ENCODE measurements at regions of chr1 and their contacts with region 1.

Region 1: GRCh38 chr1:150561974-150562445 is 12.8 kb downstream of the ADAMTSL4 start:
- DNase-seq: peak; percentile 92
- H3K4me3 ChIP-seq: peak overlapping the region; percentile 3 to 49 (median 41)
- H3K27ac ChIP-seq: peak overlapping the region; percentile 99
- H3K4me1 ChIP-seq: peaks cover 57% of the 10 kb centered on the region
- H3K27me3 ChIP-seq: no peaks in the 10 kb centered on the region
- CTCF ChIP-seq: no peak
- POLR2A ChIP-seq: peak; percentile 15

Region 2: GRCh38 chr1:150235852-150236613 is 326.0 kb before region 1 on chr1 and contains the start of gene ANP32E:
- CTCF ChIA-PET with region 1: no interaction called
- POLR2A ChIA-PET with region 1: no interaction called
- dilution Hi-C with region 1: no loop called
- intact Hi-C with region 1: no loop called
- DNase-seq: peak; percentile 99
- H3K4me3 ChIP-seq: peak within 1 kb of the TSS; percentile 72 to 95 (median 86)
- H3K27ac ChIP-seq: peak within 1 kb of the TSS; percentile 61
- H3K4me1 ChIP-seq: peaks cover 11% of the 10 kb centered on the region
- H3K27me3 ChIP-seq: no peaks in the 10 kb centered on the region
- CTCF ChIP-seq: no peak
- POLR2A ChIP-seq: peak; percentile 98
- total RNA-seq, gene ANP32E: 53.4 and 57.9 TPM in 2 replicates

Region 3: DNA sequence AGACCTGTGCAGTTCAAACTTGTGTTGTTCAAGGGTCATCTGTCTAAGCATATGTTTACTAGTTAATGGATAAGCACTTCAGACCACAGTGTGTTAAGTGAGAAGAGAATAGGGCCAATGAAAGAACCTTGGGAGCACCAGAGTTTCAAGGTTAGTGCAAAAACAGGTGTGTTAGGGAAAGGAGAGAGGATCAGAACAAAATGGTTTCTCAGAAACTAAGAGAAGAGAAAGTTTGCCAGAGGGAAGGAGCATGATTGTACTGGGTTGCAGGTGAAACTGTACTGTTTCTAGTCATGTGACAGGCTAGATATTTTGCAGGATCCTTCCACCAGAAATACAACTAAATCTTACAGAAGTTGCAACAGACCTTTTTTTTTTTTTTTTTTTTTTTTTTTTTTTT is 174.8 kb before region 1 on chr1:
- CTCF ChIA-PET with region 1: no interaction called
- POLR2A ChIA-PET with region 1: no interaction called
- dilution Hi-C with region 1: no loop called
- intact Hi-C with region 1: no loop called
- DNase-seq: no peak
- H3K4me3 ChIP-seq: no peak overlapping the region
- H3K27ac ChIP-seq: no peak overlapping the region
- H3K4me1 ChIP-seq: no peaks in the 10 kb centered on the region
- H3K27me3 ChIP-seq: no peaks in the 10 kb centered on the region
- CTCF ChIP-seq: no peak
- POLR2A ChIP-seq: no peak

Region 4: GRCh38 chr1:150486964-150487762 is 74.8 kb before region 1 on chr1 and contains the start of gene TARS2:
- CTCF ChIA-PET with region 1: no interaction called
- POLR2A ChIA-PET with region 1: no interaction called
- dilution Hi-C with region 1: no loop called
- intact Hi-C with region 1: loop called (anchors 2 kb)
- DNase-seq: peak; percentile 99
- H3K4me3 ChIP-seq: peak within 1 kb of the TSS; percentile 53 to 81 (median 65)
- H3K27ac ChIP-seq: peak within 1 kb of the TSS; percentile 63
- H3K4me1 ChIP-seq: peaks cover 7% of the 10 kb centered on the region
- H3K27me3 ChIP-seq: no peaks in the 10 kb centered on the region
- CTCF ChIP-seq: no peak
- POLR2A ChIP-seq: peak; percentile 84
- total RNA-seq, gene TARS2: 20.6 and 21.5 TPM in 2 replicates

Region 5: DNA sequence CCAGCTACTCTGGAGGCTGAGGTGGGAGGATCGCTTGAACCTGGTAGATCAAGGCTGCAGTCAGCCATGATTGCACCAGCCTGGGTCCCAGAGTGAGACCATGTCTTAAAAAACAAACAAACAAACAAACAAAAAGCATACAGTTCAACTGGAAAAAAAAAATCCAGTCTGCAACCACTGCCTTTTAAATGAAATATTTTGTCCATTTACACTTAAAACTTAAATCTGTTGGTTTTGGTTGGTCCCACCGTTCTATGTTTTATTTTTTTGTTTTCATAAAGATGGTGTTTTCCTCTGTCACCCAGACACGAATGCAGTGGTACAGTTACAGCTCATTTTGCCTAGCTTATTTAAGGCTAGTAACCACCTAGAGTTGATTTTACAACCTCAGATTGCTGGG is 36.7 kb before region 1 on chr1:
- CTCF ChIA-PET with region 1: no interaction called
- POLR2A ChIA-PET with region 1: no interaction called
- dilution Hi-C with region 1: no loop called
- intact Hi-C with region 1: no loop called
- DNase-seq: no peak
- H3K4me3 ChIP-seq: no peak overlapping the region
- H3K27ac ChIP-seq: no peak overlapping the region
- H3K4me1 ChIP-seq: no peaks in the 10 kb centered on the region
- H3K27me3 ChIP-seq: no peaks in the 10 kb centered on the region
- CTCF ChIP-seq: no peak
- POLR2A ChIP-seq: no peak

Region 6: DNA sequence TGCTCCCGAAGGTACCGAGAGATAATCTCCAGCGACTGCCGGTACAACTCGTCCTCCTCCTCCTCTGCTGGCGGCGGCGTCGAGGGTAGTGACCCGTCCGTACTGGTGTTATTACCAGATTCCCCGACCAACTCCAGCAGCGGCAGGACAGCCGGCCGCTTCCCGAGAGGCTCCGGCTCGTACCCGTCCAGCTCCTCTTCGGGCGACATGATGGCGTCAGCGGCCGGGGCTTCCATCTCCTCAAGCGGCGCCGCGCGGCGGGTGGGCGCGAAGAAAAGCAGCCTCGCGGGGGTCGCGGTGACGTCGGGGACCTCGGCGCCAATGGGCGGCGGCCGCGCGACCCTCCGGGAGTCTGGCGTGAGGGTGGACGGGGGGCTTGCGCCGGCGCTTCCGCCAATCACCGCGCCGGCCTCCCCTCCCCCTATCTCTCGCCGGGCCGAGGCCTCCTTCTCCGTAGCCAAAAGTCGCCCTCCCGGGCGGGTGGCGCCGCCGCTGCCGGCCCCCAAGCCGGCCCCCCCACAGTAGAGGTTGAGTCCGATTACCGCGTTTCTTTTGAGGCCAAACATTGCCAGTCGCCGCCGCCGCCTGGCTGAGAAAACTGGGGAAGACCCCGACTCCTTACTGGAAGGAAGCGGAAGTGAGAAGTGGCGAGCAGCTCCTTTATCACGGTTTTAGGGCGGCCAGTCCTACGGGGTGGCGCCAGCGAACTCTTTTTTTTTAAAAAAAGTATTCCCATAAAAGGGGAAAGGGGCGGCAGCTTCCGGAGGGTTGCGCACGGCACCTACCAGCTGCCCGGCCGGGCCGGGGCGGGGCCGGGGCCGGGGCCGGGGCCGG is 17.2 kb after region 1 on chr1 and contains the start of gene MCL1:
- CTCF ChIA-PET with region 1: interaction called, 184 read pairs
- POLR2A ChIA-PET with region 1: interaction called, 39 read pairs
- dilution Hi-C with region 1: no loop called
- intact Hi-C with region 1: loop called (anchors 1 kb)
- DNase-seq: peak; percentile 96
- H3K4me3 ChIP-seq: peak within 1 kb of the TSS; percentile 91 to 99 (median 92)
- H3K27ac ChIP-seq: peak within 1 kb of the TSS; percentile 98
- H3K4me1 ChIP-seq: peaks cover 28% of the 10 kb centered on the region
- H3K27me3 ChIP-seq: no peaks in the 10 kb centered on the region
- CTCF ChIP-seq: no peak
- POLR2A ChIP-seq: peak; percentile 99
- total RNA-seq, gene MCL1: 186 and 212 TPM in 2 replicates

Region 7: GRCh38 chr1:150621497-150622302 is 59.7 kb after region 1 on chr1:
- CTCF ChIA-PET with region 1: interaction called, 288 read pairs
- POLR2A ChIA-PET with region 1: interaction called, 4 read pairs
- dilution Hi-C with region 1: no loop called
- intact Hi-C with region 1: loop called (anchors 1 kb)
- DNase-seq: peak; percentile 73
- H3K4me3 ChIP-seq: no peak overlapping the region
- H3K27ac ChIP-seq: peak overlapping the region; percentile 27
- H3K4me1 ChIP-seq: peaks cover 30% of the 10 kb centered on the region
- H3K27me3 ChIP-seq: no peaks in the 10 kb centered on the region
- CTCF ChIP-seq: peak; percentile 65 to 66
- POLR2A ChIP-seq: no peak

Region 8: DNA sequence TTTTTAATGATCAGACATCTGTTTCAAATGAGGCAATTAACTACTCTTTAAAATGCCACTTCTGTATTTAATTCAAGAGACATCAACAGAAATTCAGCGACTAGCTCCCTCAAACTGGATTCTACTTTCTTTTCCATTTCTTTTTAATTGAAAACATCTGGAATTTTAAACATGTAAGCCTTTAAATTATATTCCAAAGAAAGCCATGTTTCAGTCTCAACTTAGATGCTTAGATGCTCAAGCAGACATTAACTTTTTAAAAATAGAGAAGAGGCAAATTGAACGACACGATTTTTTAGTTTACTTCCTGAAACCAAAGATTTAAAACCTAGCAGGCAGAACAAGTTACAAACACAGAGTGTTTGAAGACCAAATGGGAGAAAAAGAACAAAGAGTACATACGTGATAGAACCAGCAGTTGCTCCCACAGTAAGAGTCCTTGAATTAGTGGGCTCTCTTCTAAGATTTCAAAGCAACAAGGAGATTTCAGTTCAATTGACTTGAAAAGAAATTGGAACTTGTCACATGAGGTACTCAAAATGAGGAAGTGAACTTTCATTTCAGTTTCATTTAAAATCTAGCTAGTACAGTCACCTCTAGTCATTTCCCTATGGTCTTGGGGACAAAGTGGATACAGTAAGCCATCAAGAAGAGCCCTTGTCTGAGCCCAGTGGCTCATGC is 203.4 kb after region 1 on chr1 and contains the start of gene CTSS:
- CTCF ChIA-PET with region 1: no interaction called
- POLR2A ChIA-PET with region 1: interaction called, 4 read pairs
- dilution Hi-C with region 1: no loop called
- intact Hi-C with region 1: loop called (anchors 1 kb)
- DNase-seq: peak; percentile 58
- H3K4me3 ChIP-seq: peak within 1 kb of the TSS in 1 of 3 experiments; percentile 6
- H3K27ac ChIP-seq: peak within 1 kb of the TSS; percentile 80
- H3K4me1 ChIP-seq: peaks cover 23% of the 10 kb centered on the region
- H3K27me3 ChIP-seq: no peaks in the 10 kb centered on the region
- CTCF ChIP-seq: no peak
- POLR2A ChIP-seq: no peak
- total RNA-seq, gene CTSS: 5.7 and 11.1 TPM in 2 replicates

Region 9: DNA sequence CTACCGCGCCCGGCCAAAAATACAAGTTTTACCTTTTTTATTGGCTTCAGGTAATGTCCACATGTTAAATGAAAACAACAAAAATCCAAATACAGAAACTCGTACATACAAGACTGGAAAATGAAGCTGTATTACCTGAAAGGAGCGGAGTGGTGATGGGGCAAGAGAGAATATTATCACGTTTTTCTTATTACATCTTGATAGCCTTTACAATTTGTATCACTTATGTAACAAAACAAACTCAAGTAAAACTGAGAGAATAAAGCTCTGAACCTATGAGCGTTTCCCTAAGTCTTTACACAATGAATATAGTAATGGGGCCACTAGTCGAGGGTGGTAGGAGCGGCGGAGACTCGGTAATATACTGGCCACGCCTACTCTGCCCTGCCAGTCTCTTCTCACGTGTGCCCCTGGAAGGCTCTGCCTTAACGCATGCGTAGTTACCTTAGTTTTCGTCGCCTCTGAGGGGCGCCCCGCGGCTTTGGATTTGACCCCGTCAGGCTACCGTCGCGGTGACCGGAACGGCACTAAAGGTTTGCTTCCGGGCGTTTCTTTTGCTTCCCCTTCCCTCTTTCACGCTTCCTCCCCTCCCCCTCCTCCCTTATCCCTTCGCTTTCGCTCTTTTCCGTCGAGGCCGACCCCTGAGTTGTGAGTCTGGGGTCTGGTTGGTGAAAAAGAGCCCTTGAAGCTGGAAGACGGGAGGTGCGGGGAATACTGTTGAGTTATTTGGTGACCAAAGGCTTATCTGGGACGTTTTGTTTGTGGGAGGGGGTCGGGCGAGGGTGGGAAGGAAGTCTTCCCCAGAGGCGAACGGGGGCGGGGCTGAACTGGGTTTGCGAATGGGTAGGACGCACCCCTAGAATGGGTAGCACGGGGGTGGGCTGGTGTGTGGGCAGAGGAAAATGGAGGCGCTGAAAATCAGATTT is 364.1 kb after region 1 on chr1 and contains the start of gene SETDB1:
- CTCF ChIA-PET with region 1: interaction called, 17 read pairs
- POLR2A ChIA-PET with region 1: no interaction called
- dilution Hi-C with region 1: no loop called
- intact Hi-C with region 1: loop called (anchors 5 kb)
- DNase-seq: peak; percentile 97
- H3K4me3 ChIP-seq: peak within 1 kb of the TSS; percentile 78 to 97 (median 91)
- H3K27ac ChIP-seq: peak within 1 kb of the TSS; percentile 84
- H3K4me1 ChIP-seq: peaks cover 6% of the 10 kb centered on the region
- H3K27me3 ChIP-seq: no peaks in the 10 kb centered on the region
- CTCF ChIP-seq: no peak
- POLR2A ChIP-seq: peak; percentile 72
- total RNA-seq, gene SETDB1: 42.0 and 49.2 TPM in 2 replicates

Measured in endothelial cell of umbilical vein (primary cell).